GM10248 (cell line): ENCODE measurements at regions of chr19 and their contacts with region 1.

Region 1: GRCh38 chr19:6577476-6578125 is 13.3 kb downstream of the CD70 start:
- DNase-seq: peak; percentile 72
- CTCF ChIP-seq: no peak

Region 2: GRCh38 chr19:6593651-6594416 is 16.2 kb after region 1 on chr19:
- CTCF ChIA-PET with region 1: interaction called, 3 read pairs
- POLR2A ChIA-PET with region 1: interaction called, 11 read pairs
- DNase-seq: peak; percentile 42
- CTCF ChIP-seq: no peak